ENCODE measurements at regions of chr4 and their contacts with region 1.

Region 1: GRCh38 chr4:112199040-112199439 is 32.5 kb upstream of the AP1AR start:
- DNase-seq: no peak
- ATAC-seq: peak; percentile 23
- H3K4me3 Mint-ChIP-seq: no peak overlapping the region
- H3K27ac Mint-ChIP-seq: no peak overlapping the region
- H3K4me1 Mint-ChIP-seq: peaks cover 23% of the 10 kb centered on the region
- H3K27me3 Mint-ChIP-seq: no peaks in the 10 kb centered on the region
- CTCF ChIP-seq: no peak

Region 2: GRCh38 chr4:112145326-112145819 is 53.7 kb before region 1 on chr4 and contains the start of gene FAM241A:
- CTCF ChIA-PET with region 1: no interaction called
- POLR2A ChIA-PET with region 1: no interaction called
- intact Hi-C with region 1: loop called (anchors 5 kb)
- DNase-seq: peak; percentile 89
- ATAC-seq: peak; percentile 95
- H3K4me3 Mint-ChIP-seq: peak within 1 kb of the TSS; percentile 97
- H3K27ac Mint-ChIP-seq: peak within 1 kb of the TSS; percentile 93
- H3K4me1 Mint-ChIP-seq: peaks cover 39% of the 10 kb centered on the region
- H3K27me3 Mint-ChIP-seq: no peaks in the 10 kb centered on the region
- CTCF ChIP-seq: no peak
- total RNA-seq, gene FAM241A: 4.1 to 4.5 TPM